PC-9 (cell line): ENCODE measurements at regions of chr17 and their contacts with region 1.

Region 1: DNA sequence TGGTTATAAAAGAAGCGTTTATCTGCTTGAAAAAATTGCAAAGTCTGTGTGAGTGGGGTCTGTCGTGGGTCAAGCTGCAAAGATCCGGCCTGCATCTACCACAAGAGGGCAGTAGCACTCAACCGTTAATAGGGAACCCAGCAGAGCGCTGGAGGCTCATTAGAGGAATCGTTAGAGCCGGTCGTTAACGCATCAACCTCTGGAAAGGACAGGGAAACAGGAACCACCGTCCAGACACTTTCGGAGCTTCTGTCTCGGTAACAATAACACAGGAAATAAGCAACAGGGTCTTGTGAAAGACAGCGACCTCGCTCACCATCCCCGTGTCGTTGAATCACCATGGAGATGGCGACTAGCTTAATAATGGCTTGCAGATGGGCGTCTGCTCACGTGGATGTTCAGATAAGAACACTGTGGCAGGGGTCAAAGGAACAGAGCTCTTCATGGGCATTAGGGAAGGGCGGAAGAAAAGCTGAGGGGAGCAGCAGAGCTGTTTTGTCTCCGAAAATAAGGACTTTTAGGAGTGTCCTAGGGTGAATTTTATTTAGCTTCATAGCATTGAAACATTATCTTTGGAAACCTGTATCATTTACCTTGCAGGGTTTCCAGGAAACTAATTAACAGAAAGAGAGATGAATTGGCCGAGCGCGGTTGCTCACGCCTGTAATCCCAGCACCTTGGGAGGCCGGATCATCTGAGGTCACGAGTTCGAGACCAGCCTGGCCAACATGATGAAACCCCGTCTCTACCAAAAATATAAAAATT is 11.9 kb upstream of the NSRP1 start:
- DNase-seq: peak; percentile 63 to 70
- H3K4me3 ChIP-seq: peak overlapping the region; percentile 57
- H3K27ac ChIP-seq: no peak overlapping the region
- H3K4me1 ChIP-seq: 0 out of 2 replicates have a peak, but pooled peaks cover 5% of the 10 kb centered on the region
- H3K27me3 ChIP-seq: no peaks in the 10 kb centered on the region
- CTCF ChIP-seq: peak; percentile 85

Region 2: GRCh38 chr17:30084788-30085187 is 20.0 kb before region 1 on chr17:
- CTCF ChIA-PET with region 1: no interaction called
- POLR2A ChIA-PET with region 1: no interaction called
- intact Hi-C with region 1: no loop called
- DNase-seq: no peak
- H3K4me3 ChIP-seq: no peak overlapping the region
- H3K27ac ChIP-seq: no peak overlapping the region
- H3K4me1 ChIP-seq: no peaks in the 10 kb centered on the region
- H3K27me3 ChIP-seq: no peaks in the 10 kb centered on the region
- CTCF ChIP-seq: no peak

Region 3: GRCh38 chr17:30236766-30237165 is 132.0 kb after region 1 on chr17:
- CTCF ChIA-PET with region 1: interaction called, 4 read pairs
- POLR2A ChIA-PET with region 1: no interaction called
- intact Hi-C with region 1: loop called (anchors 1 kb)
- DNase-seq: peak in 1 of 2 experiments; percentile 49
- H3K4me3 ChIP-seq: no peak overlapping the region
- H3K27ac ChIP-seq: no peak overlapping the region
- H3K4me1 ChIP-seq: no peaks in the 10 kb centered on the region
- H3K27me3 ChIP-seq: peaks cover 37% of the 10 kb centered on the region
- CTCF ChIP-seq: peak; percentile 27; the same call in 1 of the 2 replicates

Region 4: DNA sequence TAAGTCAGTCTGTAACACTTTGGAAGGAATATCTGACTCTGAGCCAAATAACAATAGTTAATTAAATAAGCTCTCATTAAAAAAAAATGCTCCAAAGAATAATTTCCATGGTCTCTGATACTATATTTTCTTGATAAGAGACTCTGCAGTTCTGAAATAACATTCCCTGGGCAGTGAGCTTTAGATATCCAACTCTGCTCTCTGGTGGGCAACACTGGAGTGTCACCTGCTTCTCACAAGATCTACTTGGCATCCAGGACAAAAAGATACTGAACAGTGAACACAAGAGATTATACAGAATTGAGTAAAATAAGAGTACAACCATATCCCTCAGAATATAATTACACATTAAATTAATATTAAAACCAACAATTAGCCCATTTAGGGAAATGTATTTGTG is 173.3 kb after region 1 on chr17:
- CTCF ChIA-PET with region 1: interaction called, 4 read pairs
- POLR2A ChIA-PET with region 1: no interaction called
- intact Hi-C with region 1: loop called (anchors 1 kb)
- DNase-seq: peak in 1 of 2 experiments; percentile 40
- H3K4me3 ChIP-seq: no peak overlapping the region
- H3K27ac ChIP-seq: no peak overlapping the region
- H3K4me1 ChIP-seq: 0 out of 2 replicates have a peak, but pooled peaks cover 6% of the 10 kb centered on the region
- H3K27me3 ChIP-seq: no peaks in the 10 kb centered on the region
- CTCF ChIP-seq: peak; percentile 57

Region 5: GRCh38 chr17:30336369-30337171 is 231.8 kb after region 1 on chr17:
- CTCF ChIA-PET with region 1: interaction called, 18 read pairs
- POLR2A ChIA-PET with region 1: no interaction called
- intact Hi-C with region 1: loop called (anchors 1 kb)
- DNase-seq: peak; percentile 41 to 45
- H3K4me3 ChIP-seq: no peak overlapping the region
- H3K27ac ChIP-seq: no peak overlapping the region
- H3K4me1 ChIP-seq: peaks cover 25% of the 10 kb centered on the region
- H3K27me3 ChIP-seq: no peaks in the 10 kb centered on the region
- CTCF ChIP-seq: peak; percentile 96

Region 6: DNA sequence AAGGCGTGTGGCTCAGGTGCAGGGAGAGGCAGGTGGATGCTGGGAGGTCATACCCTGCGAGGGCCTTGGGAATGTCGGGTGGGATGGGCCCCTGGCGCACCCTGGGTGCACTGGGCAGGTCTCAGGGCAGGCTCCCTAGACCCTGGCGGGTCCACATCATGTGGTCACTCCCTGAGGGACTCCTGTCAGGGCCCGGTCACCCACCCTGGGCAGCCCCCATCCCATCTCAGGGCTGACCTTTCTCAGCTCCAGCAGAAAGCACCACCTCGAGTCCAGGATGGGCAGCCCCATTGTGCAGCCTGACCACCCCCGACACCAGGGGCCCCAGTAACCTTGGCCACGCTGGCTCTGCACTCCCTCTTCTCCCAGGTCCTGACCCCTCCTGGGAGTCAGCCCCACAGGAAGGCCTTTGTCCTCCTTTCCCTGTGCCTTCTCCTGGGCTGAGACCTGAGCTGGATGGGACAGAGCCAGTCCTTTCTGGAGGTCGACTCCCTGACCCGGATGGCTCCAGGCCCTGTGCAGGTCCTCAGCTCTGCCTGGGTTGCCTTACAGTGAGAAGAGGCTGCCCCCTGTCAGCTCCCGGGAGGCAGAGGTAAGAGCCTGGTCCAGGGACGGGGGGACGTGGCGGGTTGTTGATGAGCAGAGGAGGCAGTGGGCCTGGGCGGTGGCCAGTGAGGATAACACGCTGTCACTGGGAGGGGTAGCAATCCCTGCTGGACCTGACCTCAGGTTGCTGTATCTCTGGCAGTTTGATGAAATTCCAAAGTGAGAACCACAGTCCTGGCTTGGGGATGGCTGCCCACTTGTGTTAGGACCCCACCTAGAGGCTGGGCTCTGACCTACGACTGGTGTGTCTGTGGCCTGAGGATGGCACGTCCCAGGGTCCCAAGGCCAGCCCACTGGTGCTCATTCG is 450.3 kb after region 1 on chr17:
- CTCF ChIA-PET with region 1: interaction called, 15 read pairs
- POLR2A ChIA-PET with region 1: no interaction called
- intact Hi-C with region 1: loop called (anchors 10 kb)
- DNase-seq: peak in 1 of 2 experiments; percentile 38
- H3K4me3 ChIP-seq: no peak overlapping the region
- H3K27ac ChIP-seq: no peak overlapping the region
- H3K4me1 ChIP-seq: peaks cover 14% of the 10 kb centered on the region
- H3K27me3 ChIP-seq: peaks cover 2% of the 10 kb centered on the region
- CTCF ChIP-seq: peak; percentile 50; the same call in 1 of the 2 replicates